ENCODE measurements at regions of chr13 and their contacts with region 1.

Region 1: DNA sequence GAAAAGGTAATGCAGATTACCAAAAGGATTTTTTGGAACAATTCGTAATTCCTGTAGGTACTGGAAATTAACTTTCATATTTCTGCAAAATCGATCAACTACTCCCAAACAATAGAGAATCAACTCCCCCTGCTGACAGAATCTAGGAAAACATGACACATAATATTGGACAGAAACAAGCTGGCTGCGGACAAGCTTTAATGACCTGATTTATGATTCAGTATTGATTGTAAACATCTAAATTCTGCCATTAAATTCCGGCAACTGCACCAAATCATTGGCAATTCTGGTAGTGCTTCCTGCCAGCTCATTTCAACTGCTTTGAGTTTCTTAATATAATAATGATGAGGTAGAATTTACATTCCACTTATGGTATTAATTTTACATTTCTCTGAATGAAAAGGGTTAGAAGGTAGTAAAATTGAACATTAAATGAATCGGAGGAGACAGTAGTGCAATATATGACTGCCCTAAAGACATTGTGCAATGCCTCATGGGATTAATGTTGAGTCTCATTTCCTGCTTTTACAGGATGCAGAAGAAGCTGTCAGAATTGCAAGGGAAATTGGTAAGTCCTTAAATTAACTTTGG is 146.5 kb downstream of the PCCA start:
- DNase-seq: peak; percentile 26
- H3K4me3 ChIP-seq: no peak overlapping the region
- H3K27ac ChIP-seq: no peak overlapping the region
- H3K4me1 ChIP-seq: peaks cover under 1% of the 10 kb centered on the region
- H3K27me3 ChIP-seq: no peaks in the 10 kb centered on the region
- CTCF ChIP-seq: peak in 3 of 4 experiments; percentile 23 to 68 (median 62)
- POLR2A ChIP-seq: no peak

Region 2: GRCh38 chr13:99617474-99618255 is 617.7 kb before region 1 on chr13:
- intact Hi-C with region 1: loop called (anchors 10 kb)
- DNase-seq: no peak
- H3K4me3 ChIP-seq: no peak overlapping the region
- H3K27ac ChIP-seq: no peak overlapping the region
- H3K4me1 ChIP-seq: no peaks in the 10 kb centered on the region
- H3K27me3 ChIP-seq: no peaks in the 10 kb centered on the region
- CTCF ChIP-seq: peak in 2 of 4 experiments; percentile 49 to 57
- POLR2A ChIP-seq: no peak

Region 3: GRCh38 chr13:99656092-99656745 is 579.2 kb before region 1 on chr13:
- intact Hi-C with region 1: loop called (anchors 5 kb)
- DNase-seq: peak; percentile 81
- H3K4me3 ChIP-seq: no peak overlapping the region
- H3K27ac ChIP-seq: no peak overlapping the region
- H3K4me1 ChIP-seq: no peaks in the 10 kb centered on the region
- H3K27me3 ChIP-seq: no peaks in the 10 kb centered on the region
- CTCF ChIP-seq: peak; percentile 84 to 92 (median 88)
- POLR2A ChIP-seq: no peak

Region 4: DNA sequence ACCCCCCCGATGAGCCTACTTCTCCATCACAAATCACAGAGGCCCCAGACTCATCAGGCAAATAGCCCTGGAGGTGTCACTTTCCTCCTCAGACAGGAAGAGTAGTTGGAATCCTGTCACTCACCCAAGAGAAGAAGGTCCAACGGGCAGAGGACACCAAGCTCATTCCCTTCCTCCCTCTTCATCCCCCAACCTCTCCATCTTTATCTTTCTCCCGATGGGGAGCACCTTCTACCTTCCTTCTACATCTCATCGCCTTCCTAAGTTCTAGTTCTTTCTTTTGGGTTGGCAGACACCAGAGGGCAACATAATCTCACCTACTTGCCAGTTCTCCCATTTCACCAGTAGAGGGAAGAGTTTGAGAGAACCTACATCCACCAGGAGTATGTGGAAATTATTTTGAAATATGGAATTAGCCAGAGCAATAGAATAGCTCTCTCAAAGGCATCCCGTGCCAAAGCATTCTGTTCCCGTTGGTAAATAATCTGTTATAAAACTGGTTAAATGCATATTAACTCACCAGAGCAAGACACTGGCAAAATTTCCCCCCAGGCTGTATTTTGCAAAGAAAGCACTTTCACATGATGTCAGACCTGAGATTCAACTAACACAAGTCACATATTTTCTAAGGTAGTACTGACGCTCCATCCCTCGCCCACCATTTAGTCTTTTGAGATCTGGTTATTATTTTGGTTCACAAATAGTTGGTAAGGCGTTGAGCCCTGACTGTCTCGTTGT is 318.9 kb before region 1 on chr13:
- intact Hi-C with region 1: loop called (anchors 5 kb)
- DNase-seq: peak; percentile 23
- H3K4me3 ChIP-seq: no peak overlapping the region
- H3K27ac ChIP-seq: no peak overlapping the region
- H3K4me1 ChIP-seq: no peaks in the 10 kb centered on the region
- H3K27me3 ChIP-seq: no peaks in the 10 kb centered on the region
- CTCF ChIP-seq: peak; percentile 55 to 90 (median 82)
- POLR2A ChIP-seq: no peak

Region 5: GRCh38 chr13:100298116-100298681 is 62.8 kb after region 1 on chr13:
- intact Hi-C with region 1: no loop called
- DNase-seq: no peak
- H3K4me3 ChIP-seq: no peak overlapping the region
- H3K27ac ChIP-seq: no peak overlapping the region
- H3K4me1 ChIP-seq: no peaks in the 10 kb centered on the region
- H3K27me3 ChIP-seq: no peaks in the 10 kb centered on the region
- CTCF ChIP-seq: no peak
- POLR2A ChIP-seq: no peak

Region 6: DNA sequence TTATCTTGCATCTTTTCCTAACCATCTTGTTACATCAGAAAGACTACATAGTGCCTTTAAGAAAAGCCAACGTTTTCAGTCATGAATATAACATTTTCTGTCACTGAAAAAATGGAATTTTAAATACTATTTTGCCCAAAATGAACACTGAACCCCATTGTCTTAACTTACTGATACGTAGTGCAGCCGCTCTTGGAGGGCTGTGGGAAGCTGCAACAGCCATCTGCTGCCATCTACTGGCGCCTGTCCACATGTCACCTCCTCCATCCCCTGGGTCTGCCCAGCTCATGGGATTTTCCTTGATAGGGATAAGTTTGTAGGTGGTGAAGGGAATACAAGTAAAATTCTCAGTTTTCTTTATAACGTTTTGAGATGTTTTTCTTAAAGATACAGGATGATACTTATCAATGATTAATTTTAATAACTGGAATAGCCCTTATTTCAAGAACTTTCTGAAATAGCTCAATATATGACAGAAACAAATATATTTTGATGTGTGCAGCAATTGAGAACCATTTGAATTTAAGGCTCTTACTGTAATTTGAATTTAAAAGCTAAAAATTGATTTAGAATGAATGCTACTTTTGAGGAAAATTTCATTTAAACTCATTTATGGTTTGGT is 279.5 kb after region 1 on chr13:
- intact Hi-C with region 1: loop called (anchors 10 kb)
- DNase-seq: peak; percentile 76
- H3K4me3 ChIP-seq: no peak overlapping the region
- H3K27ac ChIP-seq: no peak overlapping the region
- H3K4me1 ChIP-seq: no peaks in the 10 kb centered on the region
- H3K27me3 ChIP-seq: no peaks in the 10 kb centered on the region
- CTCF ChIP-seq: peak; percentile 69 to 85 (median 74)
- POLR2A ChIP-seq: no peak